ENCODE measurements at regions of chr11 and their contacts with region 1.

Region 1: DNA sequence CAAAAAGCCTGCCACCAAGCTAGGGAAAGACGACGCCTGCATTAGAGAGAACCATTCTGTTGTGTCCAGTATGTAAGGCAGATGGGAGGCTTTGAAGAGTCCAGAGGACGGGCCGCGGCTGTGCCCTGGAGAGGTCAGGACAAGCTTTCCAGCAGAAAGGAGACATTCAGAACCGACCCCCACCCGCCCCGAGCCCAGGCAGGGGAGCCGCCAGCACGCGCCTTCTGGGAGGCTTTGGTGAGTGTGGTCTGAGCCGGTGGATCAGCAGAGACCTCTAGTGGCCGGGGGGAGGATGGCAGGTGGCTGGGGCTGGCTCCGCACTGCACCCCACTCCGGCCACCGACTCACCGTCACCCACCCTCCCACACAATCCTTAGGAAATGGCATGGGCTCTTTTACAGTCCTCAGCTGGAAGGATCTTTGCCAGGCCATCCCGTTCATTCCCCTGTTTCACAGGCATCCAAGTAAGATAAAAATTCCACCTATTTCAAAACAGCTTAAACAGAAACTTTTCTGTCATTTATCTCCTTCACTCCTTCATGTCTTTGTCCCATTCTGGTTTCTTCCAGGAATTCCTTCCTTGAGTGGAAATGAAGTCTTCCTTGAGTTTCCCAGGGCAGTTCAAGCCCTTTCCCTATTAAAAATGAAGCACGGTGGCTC is 91.2 kb downstream of the FEZ1 start:
- DNase-seq: peak; percentile 78
- ATAC-seq: peak; percentile 99
- H3K4me3 Mint-ChIP-seq: no peak overlapping the region
- H3K27ac Mint-ChIP-seq: no peak overlapping the region
- H3K4me1 Mint-ChIP-seq: peaks cover 4% of the 10 kb centered on the region
- H3K27me3 Mint-ChIP-seq: peaks cover 44% of the 10 kb centered on the region
- CTCF ChIP-seq: peak; percentile 81

Region 2: GRCh38 chr11:124961972-124962609 is 442.8 kb before region 1 on chr11:
- CTCF ChIA-PET with region 1: interaction called, 3 read pairs
- POLR2A ChIA-PET with region 1: no interaction called
- intact Hi-C with region 1: loop called (anchors 10 kb)
- DNase-seq: no peak
- ATAC-seq: peak; percentile 93
- H3K4me3 Mint-ChIP-seq: no peak overlapping the region
- H3K27ac Mint-ChIP-seq: no peak overlapping the region
- H3K4me1 Mint-ChIP-seq: no peaks in the 10 kb centered on the region
- H3K27me3 Mint-ChIP-seq: no peaks in the 10 kb centered on the region
- CTCF ChIP-seq: peak; percentile 62

Region 3: GRCh38 chr11:125390946-125391345 is 14.0 kb before region 1 on chr11:
- CTCF ChIA-PET with region 1: interaction called, 11 read pairs
- POLR2A ChIA-PET with region 1: no interaction called
- intact Hi-C with region 1: no loop called
- DNase-seq: no peak
- ATAC-seq: no peak
- H3K4me3 Mint-ChIP-seq: no peak overlapping the region
- H3K27ac Mint-ChIP-seq: no peak overlapping the region
- H3K4me1 Mint-ChIP-seq: no peaks in the 10 kb centered on the region
- H3K27me3 Mint-ChIP-seq: peaks cover 9% of the 10 kb centered on the region
- CTCF ChIP-seq: no peak

Region 4: DNA sequence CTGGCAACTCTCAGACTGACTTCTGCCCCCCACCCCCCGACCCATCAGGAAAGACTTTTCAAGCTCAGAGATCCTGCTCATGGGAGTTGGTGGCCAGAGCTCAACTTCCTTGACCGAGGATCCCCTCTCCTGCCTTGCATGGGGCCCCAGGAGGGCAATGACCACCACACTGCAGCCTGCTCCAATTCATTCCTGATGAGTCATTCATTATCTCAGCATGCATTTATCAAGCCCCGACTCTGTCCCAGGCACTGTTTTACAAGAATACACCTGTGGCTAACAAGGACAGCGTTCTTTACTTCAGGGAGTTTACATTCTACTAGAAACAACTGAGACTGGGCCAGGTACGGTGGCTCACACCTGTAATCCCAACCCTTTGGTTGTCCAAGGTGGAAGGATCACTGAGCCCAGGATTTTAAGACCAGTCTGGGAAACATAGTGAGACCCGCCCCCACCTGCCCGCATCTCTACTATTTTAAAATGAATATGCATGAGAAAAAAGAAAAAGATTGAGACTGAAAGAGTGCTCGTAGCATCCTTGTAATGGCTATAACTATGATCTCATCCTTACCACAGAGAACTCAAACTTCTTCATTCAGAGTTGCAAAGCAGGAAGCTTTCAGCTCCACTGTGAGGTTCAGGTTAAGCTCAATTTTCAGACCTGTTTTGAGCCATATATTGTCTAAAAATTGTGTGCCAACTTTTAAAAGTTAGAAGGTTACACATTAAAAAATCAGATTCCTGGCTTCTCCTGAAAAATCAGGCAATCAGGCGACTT is 30.7 kb after region 1 on chr11:
- CTCF ChIA-PET with region 1: interaction called, 12 read pairs
- POLR2A ChIA-PET with region 1: no interaction called
- intact Hi-C with region 1: no loop called
- DNase-seq: no peak
- ATAC-seq: no peak
- H3K4me3 Mint-ChIP-seq: no peak overlapping the region
- H3K27ac Mint-ChIP-seq: no peak overlapping the region
- H3K4me1 Mint-ChIP-seq: no peaks in the 10 kb centered on the region
- H3K27me3 Mint-ChIP-seq: peaks cover 19% of the 10 kb centered on the region
- CTCF ChIP-seq: no peak